ENCODE measurements at regions of chr7 and their contacts with region 1.

Region 1: GRCh38 chr7:1065263-1066260 is 21.2 kb downstream of the GPR146 start:
- DNase-seq: peak; percentile 72
- H3K4me3 Mint-ChIP-seq: no peak overlapping the region
- H3K27ac Mint-ChIP-seq: no peak overlapping the region
- H3K4me1 Mint-ChIP-seq: no peaks in the 10 kb centered on the region
- H3K27me3 Mint-ChIP-seq: no peaks in the 10 kb centered on the region
- CTCF ChIP-seq: peak; percentile 82

Region 2: DNA sequence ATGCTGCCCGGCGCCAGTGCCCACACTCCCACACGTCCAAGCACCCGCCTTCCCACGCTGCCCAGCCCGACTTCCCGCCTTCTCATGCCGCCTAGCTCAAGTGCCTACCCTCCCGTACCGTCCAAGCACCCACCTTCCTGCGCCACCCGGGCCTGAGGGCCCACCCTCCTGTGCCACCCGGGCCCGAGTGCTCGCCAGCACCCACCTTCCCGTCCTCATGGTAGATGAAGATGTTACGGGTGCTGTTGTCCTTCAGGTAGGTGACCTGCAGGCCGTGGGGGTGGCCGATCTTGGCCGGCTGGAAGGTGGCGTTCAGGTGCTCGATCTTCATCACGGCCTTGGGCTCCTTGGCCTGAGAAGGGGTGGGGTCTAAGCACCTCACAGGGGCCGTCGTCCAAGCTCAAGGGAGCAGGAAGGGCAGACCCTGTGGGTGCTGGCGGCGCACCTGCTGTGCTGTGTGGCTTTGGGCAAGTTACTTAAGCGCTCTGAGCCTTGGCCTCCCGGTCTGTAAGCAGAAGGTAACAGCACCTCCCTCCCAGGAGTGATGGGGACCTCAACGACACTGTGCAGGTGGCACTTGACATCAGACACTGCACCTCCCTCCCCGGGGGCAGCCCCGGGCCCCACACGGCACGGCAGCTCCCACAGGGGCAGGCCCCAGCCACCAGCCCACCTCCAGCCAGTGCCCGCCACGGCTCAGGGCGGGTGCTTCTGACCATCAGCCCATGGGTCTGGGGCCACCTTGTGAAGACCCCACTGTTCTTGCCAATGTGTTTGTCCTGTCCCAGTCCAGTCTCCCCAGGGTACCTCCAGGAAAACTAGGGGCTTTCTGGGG is 161.4 kb before region 1 on chr7:
- CTCF ChIA-PET with region 1: no interaction called
- POLR2A ChIA-PET with region 1: no interaction called
- intact Hi-C with region 1: no loop called
- DNase-seq: no peak
- H3K4me3 Mint-ChIP-seq: no peak overlapping the region
- H3K27ac Mint-ChIP-seq: no peak overlapping the region
- H3K4me1 Mint-ChIP-seq: peaks cover 4% of the 10 kb centered on the region
- H3K27me3 Mint-ChIP-seq: peaks cover 19% of the 10 kb centered on the region
- CTCF ChIP-seq: no peak

Region 3: DNA sequence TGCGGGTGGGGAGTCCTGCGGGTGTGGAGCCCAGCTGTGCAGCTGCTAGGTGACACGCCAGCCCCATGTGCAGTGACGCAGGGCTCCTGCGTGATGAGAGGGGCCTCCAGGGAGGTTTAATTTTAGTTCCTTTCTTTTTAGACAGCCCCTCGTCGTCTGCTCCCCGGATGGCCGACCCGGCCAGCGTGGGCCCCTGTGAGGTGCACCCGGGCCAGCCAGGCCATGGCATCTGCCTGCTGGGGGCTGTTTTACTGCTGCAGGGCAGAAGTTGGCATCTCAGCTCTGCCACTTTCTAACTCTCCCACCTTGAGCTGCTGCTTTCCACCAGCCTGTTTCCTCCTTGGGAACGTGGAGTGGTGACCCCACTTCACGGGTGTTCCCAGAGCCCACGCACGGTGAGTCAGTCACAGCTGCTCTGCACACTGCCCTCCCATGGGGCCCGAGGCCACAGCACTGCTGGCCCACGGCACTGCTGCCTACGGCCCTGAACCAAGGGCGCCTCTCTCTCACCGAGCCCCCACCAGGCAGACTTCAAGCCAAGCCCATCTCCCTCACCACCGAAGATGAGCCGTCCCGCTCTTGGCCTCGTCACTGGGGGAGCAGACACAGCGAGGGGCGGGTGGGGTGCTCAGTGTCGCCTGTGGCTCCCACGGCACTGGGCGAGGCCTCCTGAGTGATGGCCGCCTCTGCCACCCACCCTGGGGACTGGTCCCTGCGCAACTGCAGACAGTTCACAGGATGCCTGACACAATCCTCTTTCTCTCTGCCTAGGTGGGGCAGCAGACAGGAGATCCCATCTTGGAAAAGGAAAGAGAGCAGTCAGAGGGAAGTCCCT is 61.3 kb before region 1 on chr7:
- CTCF ChIA-PET with region 1: no interaction called
- POLR2A ChIA-PET with region 1: no interaction called
- intact Hi-C with region 1: no loop called
- DNase-seq: no peak
- H3K4me3 Mint-ChIP-seq: no peak overlapping the region
- H3K27ac Mint-ChIP-seq: no peak overlapping the region
- H3K4me1 Mint-ChIP-seq: no peaks in the 10 kb centered on the region
- H3K27me3 Mint-ChIP-seq: no peaks in the 10 kb centered on the region
- CTCF ChIP-seq: no peak

Region 4: DNA sequence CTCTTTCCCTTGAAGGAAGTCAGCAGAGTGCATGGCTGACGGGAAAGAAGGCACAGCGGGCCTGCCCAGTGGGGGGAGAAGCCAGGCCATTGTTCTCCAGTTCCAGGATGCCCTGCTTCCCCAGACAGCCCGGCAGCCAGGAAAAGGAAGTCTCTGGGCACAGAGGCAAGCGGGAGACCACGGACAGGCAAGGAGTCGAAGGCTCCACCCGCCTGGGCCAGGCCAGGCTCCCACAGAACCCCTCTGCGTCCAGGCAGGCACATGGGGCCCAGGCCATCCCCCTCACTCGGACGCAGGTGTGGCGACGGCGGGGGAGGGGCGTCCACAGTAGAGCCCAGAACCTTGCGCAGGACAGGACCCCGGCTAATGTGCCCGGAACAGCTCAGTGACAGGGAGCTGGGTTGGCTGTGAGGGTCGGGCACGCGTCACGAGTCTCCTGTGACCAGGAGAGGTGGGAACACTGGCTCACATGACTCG is 12.5 kb before region 1 on chr7:
- CTCF ChIA-PET with region 1: interaction called, 25 read pairs
- POLR2A ChIA-PET with region 1: no interaction called
- intact Hi-C with region 1: no loop called
- DNase-seq: no peak
- H3K4me3 Mint-ChIP-seq: no peak overlapping the region
- H3K27ac Mint-ChIP-seq: no peak overlapping the region
- H3K4me1 Mint-ChIP-seq: no peaks in the 10 kb centered on the region
- H3K27me3 Mint-ChIP-seq: no peaks in the 10 kb centered on the region
- CTCF ChIP-seq: no peak

Region 5: GRCh38 chr7:1076181-1077072 is 10.9 kb after region 1 on chr7:
- CTCF ChIA-PET with region 1: interaction called, 10 read pairs
- POLR2A ChIA-PET with region 1: no interaction called
- intact Hi-C with region 1: no loop called
- DNase-seq: peak; percentile 32
- H3K4me3 Mint-ChIP-seq: peak overlapping the region; percentile 25
- H3K27ac Mint-ChIP-seq: peak overlapping the region; percentile 32
- H3K4me1 Mint-ChIP-seq: peaks cover 6% of the 10 kb centered on the region
- H3K27me3 Mint-ChIP-seq: no peaks in the 10 kb centered on the region
- CTCF ChIP-seq: no peak

Region 6: DNA sequence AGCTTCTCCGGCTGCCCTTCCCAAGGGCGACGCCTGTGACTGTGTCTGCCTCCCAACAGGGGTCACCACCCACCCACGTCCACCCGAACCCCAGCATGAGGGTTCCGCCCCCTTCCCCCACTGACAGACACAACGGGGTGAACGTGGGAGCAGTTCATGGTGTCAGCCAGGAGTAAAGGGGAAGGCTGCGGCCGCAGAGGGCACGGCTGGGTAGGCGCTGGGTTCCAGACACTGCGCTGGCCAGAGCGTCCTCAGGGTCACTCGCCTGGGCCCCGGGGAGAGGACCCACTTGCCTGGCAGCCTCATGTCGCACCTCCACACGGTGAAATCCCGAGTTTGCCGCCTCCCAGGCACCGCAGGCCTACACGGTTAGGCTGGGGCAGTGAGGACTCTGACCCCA is 417.5 kb after region 1 on chr7:
- CTCF ChIA-PET with region 1: no interaction called
- POLR2A ChIA-PET with region 1: no interaction called
- intact Hi-C with region 1: no loop called
- DNase-seq: no peak
- H3K4me3 Mint-ChIP-seq: no peak overlapping the region
- H3K27ac Mint-ChIP-seq: no peak overlapping the region
- H3K4me1 Mint-ChIP-seq: no peaks in the 10 kb centered on the region
- H3K27me3 Mint-ChIP-seq: no peaks in the 10 kb centered on the region
- CTCF ChIP-seq: no peak